ENCODE measurements at regions of chr9 and their contacts with region 1.

Region 1: DNA sequence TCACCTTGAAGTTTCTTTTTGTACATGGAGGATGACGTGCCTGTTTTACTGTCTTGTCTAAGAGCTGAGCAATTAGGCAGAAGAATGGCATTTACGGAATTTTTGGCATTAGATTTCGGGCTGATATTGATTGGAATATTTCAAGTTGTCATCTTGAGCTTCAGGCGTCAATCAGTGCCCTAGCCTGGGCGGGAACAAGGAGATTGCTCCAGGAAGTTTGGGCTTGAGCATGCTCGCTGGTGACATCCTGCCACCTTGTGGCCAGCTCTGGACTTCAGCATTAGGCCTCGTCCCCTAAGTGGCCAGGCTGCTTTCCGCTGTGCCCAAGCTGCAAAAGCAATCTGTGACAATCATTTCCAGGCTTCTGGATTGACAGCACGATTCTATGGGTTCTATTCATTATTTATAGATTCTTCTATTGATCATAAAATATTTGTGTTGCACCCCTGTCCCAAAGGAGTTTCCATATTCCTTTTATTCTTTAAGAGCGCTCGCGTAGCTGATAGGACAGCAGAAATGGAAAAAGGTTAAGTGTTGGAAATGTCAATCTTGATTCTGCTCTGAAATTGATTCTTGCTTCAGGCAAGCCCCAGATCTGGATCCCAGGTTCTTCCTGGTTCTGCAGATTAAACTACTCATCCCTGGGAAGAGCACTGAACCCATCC is 79.3 kb downstream of the SLC28A3 start:
- DNase-seq: peak; percentile 80
- H3K4me3 ChIP-seq: no peak overlapping the region
- H3K27ac ChIP-seq: no peak overlapping the region
- H3K4me1 ChIP-seq: no peaks in the 10 kb centered on the region
- H3K27me3 ChIP-seq: peaks cover 10 to 24% of the 10 kb centered on the region in 2 experiments
- CTCF ChIP-seq: peak; percentile 83 to 89
- POLR2A ChIP-seq: no peak

Region 2: GRCh38 chr9:83920927-83921707 is 340.1 kb before region 1 on chr9 and contains the start of gene KIF27:
- CTCF ChIA-PET with region 1: interaction called, 26 read pairs
- POLR2A ChIA-PET with region 1: no interaction called
- dilution Hi-C with region 1: no loop called
- intact Hi-C with region 1: loop called (anchors 1 kb)
- DNase-seq: peak; percentile 98
- H3K4me3 ChIP-seq: peak within 1 kb of the TSS; percentile 41 to 78 (median 69)
- H3K27ac ChIP-seq: peak within 1 kb of the TSS; percentile 69
- H3K4me1 ChIP-seq: peaks cover 10% of the 10 kb centered on the region
- H3K27me3 ChIP-seq: no peaks in the 10 kb centered on the region
- CTCF ChIP-seq: peak; percentile 8 to 36
- POLR2A ChIP-seq: peak; percentile 93
- total RNA-seq, gene KIF27: 3.2 and 3.5 TPM in 2 replicates

Region 3: DNA sequence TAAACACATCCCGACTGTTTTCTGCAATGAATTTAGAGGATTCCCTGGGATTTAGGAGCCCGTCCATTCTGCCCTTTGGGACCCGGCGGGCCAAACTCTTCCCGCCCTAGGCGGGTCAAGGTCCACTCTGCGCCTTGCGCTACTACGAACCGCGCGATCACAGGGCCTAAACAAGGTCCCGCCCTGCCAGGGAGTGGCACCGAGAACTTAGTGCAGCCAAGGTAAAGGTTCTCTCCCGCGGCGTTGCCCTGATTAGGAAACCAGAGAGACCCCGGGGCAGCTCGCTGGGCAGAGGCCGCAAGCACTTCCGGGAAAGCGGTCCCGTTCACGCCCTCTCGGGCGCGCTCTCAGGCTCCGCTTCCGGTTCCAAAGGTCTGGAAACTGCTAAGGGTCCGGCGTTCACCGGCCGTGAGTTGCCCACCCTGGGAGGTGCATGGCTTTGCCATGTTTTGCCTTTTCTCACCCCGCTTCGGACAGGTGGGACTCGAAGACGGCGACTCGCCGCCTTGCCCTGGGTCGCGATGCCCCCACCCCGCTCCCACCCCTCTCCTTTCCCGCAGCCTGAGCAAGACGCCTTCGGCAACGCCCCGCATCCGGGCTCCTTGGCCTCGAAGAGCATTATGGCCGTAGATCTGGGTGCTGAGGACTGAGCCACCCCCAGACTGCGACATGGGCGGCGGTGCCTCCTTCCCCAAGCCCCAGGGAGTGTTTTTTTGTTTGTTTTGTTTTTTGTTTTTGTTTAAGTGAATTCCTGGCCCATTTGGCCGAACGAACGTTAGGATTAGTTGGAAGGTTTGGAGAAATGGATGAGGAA is 304.6 kb before region 1 on chr9:
- CTCF ChIA-PET with region 1: interaction called, 26 read pairs
- POLR2A ChIA-PET with region 1: no interaction called
- dilution Hi-C with region 1: no loop called
- intact Hi-C with region 1: no loop called
- DNase-seq: no peak
- H3K4me3 ChIP-seq: peak overlapping the region; percentile 20 to 56 (median 42)
- H3K27ac ChIP-seq: peak overlapping the region; percentile 6
- H3K4me1 ChIP-seq: peaks cover 12% of the 10 kb centered on the region
- H3K27me3 ChIP-seq: no peaks in the 10 kb centered on the region
- CTCF ChIP-seq: no peak
- POLR2A ChIP-seq: peak; percentile 44

Region 4: DNA sequence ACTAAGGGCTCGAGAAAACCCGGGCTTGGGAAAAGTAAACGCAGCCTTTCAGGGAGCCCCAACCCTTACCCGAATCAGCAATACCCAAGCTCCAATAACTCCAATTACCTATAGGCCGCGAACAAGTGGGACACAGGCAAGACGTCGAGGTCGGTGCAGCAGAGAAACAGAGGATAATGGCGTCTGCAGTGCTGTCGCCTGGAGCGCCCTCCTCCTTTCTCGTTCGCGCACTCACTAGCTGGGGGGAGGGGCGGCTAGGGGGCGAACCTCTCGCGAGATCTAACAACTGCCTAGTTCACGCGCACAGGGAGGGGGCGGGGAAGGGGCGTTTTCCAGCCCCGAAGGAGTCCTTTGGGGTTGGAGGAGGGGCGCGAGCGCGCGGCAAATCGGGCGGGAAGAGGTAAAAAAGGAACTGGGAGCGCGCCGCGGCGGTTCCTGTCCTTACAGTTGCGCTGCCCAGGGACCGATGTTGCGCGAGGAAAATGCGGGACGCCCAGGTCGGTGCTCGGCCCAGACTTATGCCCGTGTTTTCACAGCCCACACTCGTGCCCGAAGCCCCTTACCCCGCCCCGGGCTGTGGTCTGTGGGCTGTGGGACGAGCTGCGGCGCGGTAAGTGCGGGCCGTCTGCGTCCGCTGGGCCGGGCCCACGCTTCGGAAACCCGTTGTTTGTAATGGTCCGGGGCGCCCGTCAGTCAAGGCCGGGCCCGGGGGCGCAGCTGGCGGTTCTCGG is 280.7 kb before region 1 on chr9 and contains the start of gene RMI1:
- CTCF ChIA-PET with region 1: interaction called, 14 read pairs
- POLR2A ChIA-PET with region 1: interaction called, 20 read pairs
- dilution Hi-C with region 1: no loop called
- intact Hi-C with region 1: loop called (anchors 1 kb)
- DNase-seq: peak; percentile 97
- H3K4me3 ChIP-seq: peak within 1 kb of the TSS; percentile 67 to 96 (median 90)
- H3K27ac ChIP-seq: peak within 1 kb of the TSS; percentile 95
- H3K4me1 ChIP-seq: peaks cover 13% of the 10 kb centered on the region
- H3K27me3 ChIP-seq: no peaks in the 10 kb centered on the region
- CTCF ChIP-seq: no peak
- POLR2A ChIP-seq: peak; percentile 95
- total RNA-seq, gene RMI1: 11.4 and 11.5 TPM in 2 replicates

Region 5: DNA sequence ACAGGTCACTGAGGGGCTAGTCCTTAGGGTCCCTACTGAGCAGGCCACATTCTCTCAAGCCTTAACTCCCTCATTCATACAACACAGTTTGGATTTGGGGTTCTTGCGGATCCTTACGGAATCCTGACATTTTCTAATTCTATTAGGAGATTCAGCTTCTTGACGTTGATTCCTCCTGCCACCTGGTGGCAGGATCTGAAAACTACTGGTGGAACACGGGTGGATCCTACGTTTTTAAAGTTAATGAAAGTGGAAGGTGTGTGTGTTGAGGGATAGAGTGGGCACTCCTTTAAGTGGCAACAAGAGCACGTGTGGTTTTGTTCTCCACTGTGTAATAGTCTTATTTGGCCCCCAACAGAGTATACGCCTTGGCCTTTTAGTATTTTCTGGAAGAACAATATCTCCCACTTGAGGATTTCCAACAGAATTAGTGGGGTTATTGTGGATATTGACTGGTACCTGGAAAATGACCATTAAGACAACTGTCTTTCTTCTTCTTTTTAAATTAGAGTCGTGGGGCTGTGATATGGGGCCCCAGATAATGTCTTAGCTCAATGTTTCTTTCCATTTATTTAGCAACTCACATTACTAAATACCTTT is 54.2 kb after region 1 on chr9:
- CTCF ChIA-PET with region 1: interaction called, 15 read pairs
- POLR2A ChIA-PET with region 1: no interaction called
- dilution Hi-C with region 1: no loop called
- intact Hi-C with region 1: loop called (anchors 1 kb)
- DNase-seq: peak; percentile 68
- H3K4me3 ChIP-seq: no peak overlapping the region
- H3K27ac ChIP-seq: no peak overlapping the region
- H3K4me1 ChIP-seq: peaks cover 2% of the 10 kb centered on the region
- H3K27me3 ChIP-seq: peaks cover 0 to 5% of the 10 kb centered on the region in 2 experiments
- CTCF ChIP-seq: peak; percentile 57 to 74
- POLR2A ChIP-seq: no peak

Region 6: DNA sequence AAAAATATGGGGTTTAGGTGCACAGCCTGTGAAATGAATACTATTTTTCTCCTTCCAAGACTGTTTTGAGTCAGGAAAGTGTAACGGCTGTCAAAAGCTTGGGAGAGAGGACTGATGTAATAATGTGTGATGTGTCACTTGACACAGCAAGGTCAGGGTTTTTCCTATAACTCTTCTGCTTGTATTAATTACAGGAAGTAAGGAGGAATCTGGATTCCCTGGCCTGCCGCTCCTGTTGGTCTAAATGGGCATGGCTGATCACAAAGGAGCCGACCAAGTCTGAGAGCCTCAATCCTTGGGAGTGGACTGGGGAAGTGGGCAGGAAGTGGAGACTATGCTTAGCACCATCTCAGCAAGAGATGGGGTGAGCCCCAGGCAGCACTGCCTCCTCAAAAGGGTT is 96.1 kb after region 1 on chr9:
- CTCF ChIA-PET with region 1: no interaction called
- POLR2A ChIA-PET with region 1: no interaction called
- dilution Hi-C with region 1: no loop called
- intact Hi-C with region 1: no loop called
- DNase-seq: no peak
- H3K4me3 ChIP-seq: no peak overlapping the region
- H3K27ac ChIP-seq: no peak overlapping the region
- H3K4me1 ChIP-seq: no peaks in the 10 kb centered on the region
- H3K27me3 ChIP-seq: no peaks in the 10 kb centered on the region
- CTCF ChIP-seq: no peak
- POLR2A ChIP-seq: no peak

Measured in endothelial cell of umbilical vein (primary cell).